ENCODE measurements at regions of chr6 and their contacts with region 1.

Region 1: DNA sequence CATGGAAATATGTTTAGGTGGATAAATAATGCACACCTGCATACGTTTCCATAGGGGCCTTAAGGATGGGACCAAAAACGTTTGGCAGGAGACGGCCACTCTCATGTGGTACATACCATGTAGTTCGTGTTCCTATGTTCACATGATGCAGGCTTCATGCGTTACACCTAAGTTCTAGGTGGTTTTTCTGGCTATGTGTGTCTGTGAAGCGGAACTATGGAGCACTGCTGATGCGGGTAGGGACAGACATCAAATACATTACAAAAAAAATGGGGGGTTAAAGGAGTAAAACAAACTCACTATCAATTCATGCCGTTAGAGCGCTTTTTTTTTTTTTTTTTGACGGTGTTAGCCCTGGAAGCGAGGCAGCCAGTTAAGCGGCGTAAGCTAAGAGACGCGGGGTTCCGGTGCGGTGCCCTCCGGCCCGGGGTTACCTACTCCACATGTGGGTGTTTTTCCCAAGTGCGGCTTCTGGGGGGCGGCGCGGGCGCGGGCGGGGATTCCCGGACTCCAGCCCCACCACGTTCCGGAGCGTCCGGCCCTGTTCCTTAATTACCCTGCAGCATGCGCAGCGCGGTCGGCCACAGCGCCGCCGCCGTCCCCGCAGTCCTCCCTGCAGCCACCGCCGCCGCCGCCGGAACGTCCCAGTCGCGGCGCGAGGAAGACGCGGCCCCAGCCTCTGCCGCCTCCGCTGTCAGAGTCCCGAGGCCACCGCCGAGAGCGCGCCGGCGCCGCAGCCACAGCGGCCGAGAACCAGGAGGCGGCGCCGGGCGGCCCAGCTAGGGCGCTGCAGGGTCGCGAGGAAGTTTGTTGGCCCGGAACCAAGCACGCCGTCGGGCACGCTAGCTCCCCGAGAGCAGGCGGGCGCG is 648 bp downstream of the COL19A1 start:
- DNase-seq: peak; percentile 64 to 78
- ATAC-seq: peak; percentile 81 to 94 (median 90)
- H3K4me3 ChIP-seq: peak overlapping the region; percentile 77
- H3K27ac ChIP-seq: peak overlapping the region; percentile 60
- H3K4me1 ChIP-seq: peaks cover 9% of the 10 kb centered on the region
- H3K27me3 ChIP-seq: no peaks in the 10 kb centered on the region
- CTCF ChIP-seq: peak; percentile 35

Region 2: GRCh38 chr6:69948479-69949114 is 81.6 kb after region 1 on chr6:
- intact Hi-C with region 1: no loop called
- DNase-seq: no peak
- ATAC-seq: no peak
- H3K4me3 ChIP-seq: no peak overlapping the region
- H3K27ac ChIP-seq: no peak overlapping the region
- H3K4me1 ChIP-seq: peaks cover 36% of the 10 kb centered on the region
- H3K27me3 ChIP-seq: no peaks in the 10 kb centered on the region
- CTCF ChIP-seq: no peak

Region 3: DNA sequence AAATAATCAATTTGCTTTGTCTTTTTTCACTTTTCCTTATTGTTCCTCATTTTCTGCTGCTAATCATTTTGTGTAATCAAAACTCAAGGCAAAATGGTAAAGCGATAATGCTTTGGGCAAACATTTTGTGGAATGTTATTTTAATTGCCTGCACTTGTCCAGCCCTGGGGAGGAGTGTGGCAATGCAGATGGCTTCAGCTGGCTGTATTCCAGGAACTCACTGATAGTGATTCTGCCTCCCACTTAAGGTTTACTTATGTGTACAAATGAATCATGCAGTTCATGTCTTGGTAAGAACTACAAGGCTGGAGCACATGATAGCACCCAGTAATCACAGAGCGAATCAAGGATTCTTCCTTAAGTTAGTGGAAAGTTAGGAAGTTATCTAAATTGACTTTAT is 107.2 kb after region 1 on chr6:
- intact Hi-C with region 1: loop called in 1 of 2 experiments (anchors 5 kb)
- DNase-seq: no peak
- ATAC-seq: peak in 1 of 4 donors; percentile 51
- H3K4me3 ChIP-seq: no peak overlapping the region
- H3K27ac ChIP-seq: no peak overlapping the region
- H3K4me1 ChIP-seq: no peaks in the 10 kb centered on the region
- H3K27me3 ChIP-seq: no peaks in the 10 kb centered on the region
- CTCF ChIP-seq: no peak